Endothelial cell of umbilical vein (primary cell): ENCODE measurements at regions of chr1 and their contacts with region 1.

Region 1: DNA sequence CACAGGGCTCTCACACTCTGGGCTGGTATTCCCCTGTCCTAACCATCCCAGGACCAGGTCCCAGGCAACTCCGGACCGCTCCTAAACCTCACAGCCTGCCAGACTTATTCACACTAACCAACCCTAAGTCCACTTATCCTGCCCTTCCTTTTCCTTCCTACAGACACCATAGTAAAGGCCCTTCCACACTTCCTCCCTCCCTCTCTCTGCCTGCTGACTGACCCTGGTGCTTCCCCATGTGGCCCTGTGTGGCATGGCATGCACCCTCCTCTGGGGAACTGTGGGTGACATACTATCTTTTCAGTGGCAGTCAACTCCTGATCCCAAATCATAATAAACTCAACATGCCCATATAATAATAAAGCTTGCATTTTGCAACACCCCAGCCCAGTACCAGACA is 155.1 kb upstream of the DNAH14 start:
- DNase-seq: no peak
- H3K4me3 ChIP-seq: no peak overlapping the region
- H3K27ac ChIP-seq: no peak overlapping the region
- H3K4me1 ChIP-seq: no peaks in the 10 kb centered on the region
- H3K27me3 ChIP-seq: no peaks in the 10 kb centered on the region
- CTCF ChIP-seq: no peak
- POLR2A ChIP-seq: no peak

Region 2: GRCh38 chr1:224753491-224753890 is 20.9 kb before region 1 on chr1:
- CTCF ChIA-PET with region 1: no interaction called
- POLR2A ChIA-PET with region 1: no interaction called
- dilution Hi-C with region 1: no loop called
- intact Hi-C with region 1: no loop called
- DNase-seq: no peak
- H3K4me3 ChIP-seq: no peak overlapping the region
- H3K27ac ChIP-seq: no peak overlapping the region
- H3K4me1 ChIP-seq: no peaks in the 10 kb centered on the region
- H3K27me3 ChIP-seq: no peaks in the 10 kb centered on the region
- CTCF ChIP-seq: no peak
- POLR2A ChIP-seq: no peak

Region 3: GRCh38 chr1:224831501-224831900 is 57.1 kb after region 1 on chr1:
- CTCF ChIA-PET with region 1: no interaction called
- POLR2A ChIA-PET with region 1: no interaction called
- dilution Hi-C with region 1: no loop called
- intact Hi-C with region 1: loop called (anchors 10 kb)
- DNase-seq: no peak
- H3K4me3 ChIP-seq: no peak overlapping the region
- H3K27ac ChIP-seq: no peak overlapping the region
- H3K4me1 ChIP-seq: no peaks in the 10 kb centered on the region
- H3K27me3 ChIP-seq: no peaks in the 10 kb centered on the region
- CTCF ChIP-seq: no peak
- POLR2A ChIP-seq: no peak

Region 4: GRCh38 chr1:225300381-225300780 is 526.0 kb after region 1 on chr1:
- CTCF ChIA-PET with region 1: no interaction called
- POLR2A ChIA-PET with region 1: no interaction called
- dilution Hi-C with region 1: no loop called
- intact Hi-C with region 1: no loop called
- DNase-seq: no peak
- H3K4me3 ChIP-seq: no peak overlapping the region
- H3K27ac ChIP-seq: no peak overlapping the region
- H3K4me1 ChIP-seq: no peaks in the 10 kb centered on the region
- H3K27me3 ChIP-seq: peaks cover 0 to 1% of the 10 kb centered on the region in 2 experiments
- CTCF ChIP-seq: no peak
- POLR2A ChIP-seq: no peak